PC-9 (cell line): ENCODE measurements at regions of chr3 and their contacts with region 1.

Region 1: DNA sequence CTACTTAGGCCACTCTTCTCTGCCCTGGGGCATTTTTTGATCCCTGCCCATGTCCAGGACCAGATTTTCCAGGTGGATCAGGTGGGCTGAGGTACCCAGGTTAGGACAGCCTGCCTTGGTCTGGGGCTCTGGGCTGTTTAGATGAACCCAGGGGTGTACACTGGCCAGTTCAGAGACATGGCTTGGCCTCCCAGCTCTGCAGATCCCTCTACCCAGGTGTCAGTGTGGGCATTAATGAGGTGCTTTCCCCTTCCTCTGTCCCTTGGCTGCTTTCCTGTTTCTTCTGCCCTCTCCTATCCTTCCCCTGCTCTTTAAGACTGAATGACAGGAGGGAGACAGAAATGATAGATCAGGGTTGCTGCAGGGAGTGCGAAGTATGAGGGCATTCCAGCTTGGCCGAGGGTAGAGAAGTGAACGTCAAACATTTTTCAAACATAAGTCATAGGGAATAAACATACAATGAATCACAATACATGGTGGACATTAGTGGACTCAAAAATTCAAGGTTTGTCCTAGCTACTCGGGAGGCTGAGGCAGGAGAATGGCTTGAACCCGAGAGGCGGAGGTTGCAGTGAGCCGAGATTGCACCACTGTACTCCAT is 30.5 kb downstream of the RTP1 start:
- DNase-seq: peak; percentile 58 to 78
- H3K4me3 ChIP-seq: no peak overlapping the region
- H3K27ac ChIP-seq: no peak overlapping the region
- H3K4me1 ChIP-seq: peaks cover 24% of the 10 kb centered on the region
- H3K27me3 ChIP-seq: peaks cover 34% of the 10 kb centered on the region
- CTCF ChIP-seq: no peak

Region 2: GRCh38 chr3:186849374-186849975 is 378.3 kb before region 1 on chr3:
- CTCF ChIA-PET with region 1: interaction called, 3 read pairs
- POLR2A ChIA-PET with region 1: no interaction called
- intact Hi-C with region 1: loop called (anchors 5 kb)
- DNase-seq: peak in 1 of 2 experiments; percentile 52
- H3K4me3 ChIP-seq: no peak overlapping the region
- H3K27ac ChIP-seq: no peak overlapping the region
- H3K4me1 ChIP-seq: no peaks in the 10 kb centered on the region
- H3K27me3 ChIP-seq: 0 out of 2 replicates have a peak, but pooled peaks cover 7% of the 10 kb centered on the region
- CTCF ChIP-seq: peak; percentile 81

Region 3: DNA sequence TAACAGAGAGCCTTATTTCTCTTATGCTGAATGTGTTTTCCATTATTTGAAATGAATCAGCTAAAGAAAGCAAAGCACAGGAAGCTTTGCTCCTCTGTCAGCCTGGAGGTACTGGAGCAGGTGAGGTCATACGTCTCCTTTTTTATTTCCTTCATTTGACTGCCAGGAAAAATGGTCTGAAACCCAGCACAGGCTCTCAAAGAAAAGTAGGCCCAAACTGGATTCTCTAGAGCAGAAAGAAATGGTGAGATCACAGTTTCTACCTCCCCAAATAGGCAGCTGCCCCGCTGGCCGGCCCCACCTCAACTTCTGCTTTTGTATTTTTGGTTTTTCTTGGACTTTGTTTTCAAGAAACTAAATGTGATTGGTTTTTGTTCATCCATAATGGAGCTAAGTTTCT is 183.6 kb before region 1 on chr3:
- CTCF ChIA-PET with region 1: no interaction called
- POLR2A ChIA-PET with region 1: no interaction called
- intact Hi-C with region 1: no loop called
- DNase-seq: no peak
- H3K4me3 ChIP-seq: no peak overlapping the region
- H3K27ac ChIP-seq: no peak overlapping the region
- H3K4me1 ChIP-seq: no peaks in the 10 kb centered on the region
- H3K27me3 ChIP-seq: no peaks in the 10 kb centered on the region
- CTCF ChIP-seq: no peak

Region 4: DNA sequence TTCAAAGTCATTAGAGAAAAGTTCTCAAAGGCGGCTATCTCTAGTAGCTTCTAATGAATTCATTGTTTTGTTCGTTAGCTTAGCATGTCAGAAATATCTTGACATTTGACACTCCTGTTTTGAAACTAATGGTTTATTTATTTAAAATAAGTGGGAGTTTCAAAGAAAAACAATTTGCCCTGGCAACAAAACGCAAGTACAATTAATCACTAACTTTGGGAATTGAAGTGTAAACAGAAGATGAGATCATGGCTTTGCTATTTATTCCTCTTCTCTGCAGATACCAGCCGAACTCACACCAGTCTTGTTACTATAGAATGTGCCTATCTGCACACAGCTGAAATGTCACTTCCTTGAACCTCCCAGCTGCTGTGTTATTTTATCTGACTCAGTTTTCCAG is 36.3 kb after region 1 on chr3:
- CTCF ChIA-PET with region 1: no interaction called
- POLR2A ChIA-PET with region 1: interaction called, 5 read pairs
- intact Hi-C with region 1: loop called (anchors 5 kb)
- DNase-seq: peak; percentile 12 to 90
- H3K4me3 ChIP-seq: no peak overlapping the region
- H3K27ac ChIP-seq: no peak overlapping the region
- H3K4me1 ChIP-seq: peaks cover 18% of the 10 kb centered on the region
- H3K27me3 ChIP-seq: no peaks in the 10 kb centered on the region; the same call in 1 of the 2 replicates
- CTCF ChIP-seq: no peak

Region 5: GRCh38 chr3:187291001-187291511 is 63.3 kb after region 1 on chr3:
- CTCF ChIA-PET with region 1: no interaction called
- POLR2A ChIA-PET with region 1: no interaction called
- intact Hi-C with region 1: loop called (anchors 5 kb)
- DNase-seq: peak in 1 of 2 experiments; percentile 11
- H3K4me3 ChIP-seq: no peak overlapping the region
- H3K27ac ChIP-seq: no peak overlapping the region
- H3K4me1 ChIP-seq: peaks cover 7% of the 10 kb centered on the region; the same call in 1 of the 2 replicates
- H3K27me3 ChIP-seq: no peaks in the 10 kb centered on the region
- CTCF ChIP-seq: no peak